K562 (cell line): ENCODE measurements at regions of chr10 and their contacts with region 1.

Region 1: DNA sequence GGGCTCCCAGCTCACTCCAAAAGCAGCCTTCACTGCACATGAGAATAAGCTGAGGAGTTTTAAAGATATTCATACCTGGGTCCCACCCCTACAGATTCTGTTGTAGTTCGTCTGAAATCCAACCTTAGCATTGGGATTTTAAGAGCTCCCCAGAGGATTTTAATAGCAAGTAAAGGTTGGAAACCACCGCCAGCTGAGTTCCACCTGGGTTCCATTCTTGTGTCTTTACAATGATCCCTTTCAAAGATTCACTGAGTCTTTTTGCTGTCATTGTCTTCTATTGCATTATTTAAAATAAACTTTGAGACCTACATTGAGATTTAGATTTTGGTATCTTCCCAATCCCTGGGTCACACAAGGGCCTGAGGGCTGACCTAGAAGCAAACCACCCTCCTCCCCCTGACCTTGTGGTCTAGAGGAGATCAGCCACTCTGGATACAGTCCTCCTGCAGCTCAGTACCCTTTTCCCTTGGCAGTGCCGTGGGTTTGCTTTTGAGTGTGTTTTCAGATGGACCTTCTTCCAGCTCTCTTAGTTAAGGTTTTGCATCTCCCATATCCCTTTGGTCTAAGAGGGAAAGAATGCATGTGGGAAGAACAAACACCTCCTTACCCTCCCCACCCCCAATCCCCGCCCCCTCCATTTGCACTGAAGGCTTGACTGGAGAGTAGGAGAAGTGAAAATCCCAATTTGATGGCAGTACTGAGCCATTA is 22.6 kb upstream of the SIRT1 start:
- DNase-seq: no peak
- ATAC-seq: peak; percentile 74
- H3K4me3 ChIP-seq: no peak overlapping the region
- H3K27ac ChIP-seq: no peak overlapping the region
- H3K4me1 ChIP-seq: no peaks in the 10 kb centered on the region; a peak in 1 of 5 replicates
- H3K27me3 ChIP-seq: no peaks in the 10 kb centered on the region
- CTCF ChIP-seq: no peak
- EP300 ChIP-seq: no peak
- POLR2A ChIP-seq: no peak
- RAD21 ChIP-seq: no peak

Region 2: DNA sequence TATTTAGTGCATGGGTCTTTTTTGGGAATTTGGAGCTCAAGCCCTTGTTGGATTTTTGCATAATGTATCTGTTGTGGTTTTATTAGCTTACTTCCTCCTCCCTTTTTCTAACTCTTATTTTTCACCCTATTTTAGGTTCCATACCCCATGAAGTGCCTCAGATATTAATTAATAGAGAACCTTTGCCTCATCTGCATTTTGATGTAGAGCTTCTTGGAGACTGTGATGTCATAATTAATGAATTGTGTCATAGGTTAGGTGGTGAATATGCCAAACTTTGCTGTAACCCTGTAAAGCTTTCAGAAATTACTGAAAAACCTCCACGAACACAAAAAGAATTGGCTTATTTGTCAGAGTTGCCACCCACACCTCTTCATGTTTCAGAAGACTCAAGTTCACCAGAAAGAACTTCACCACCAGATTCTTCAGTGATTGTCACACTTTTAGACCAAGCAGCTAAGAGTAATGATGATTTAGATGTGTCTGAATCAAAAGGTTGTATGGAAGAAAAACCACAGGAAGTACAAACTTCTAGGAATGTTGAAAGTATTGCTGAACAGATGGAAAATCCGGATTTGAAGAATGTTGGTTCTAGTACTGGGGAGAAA is 50.5 kb after region 1 on chr10:
- CTCF ChIA-PET with region 1: no interaction called
- POLR2A ChIA-PET with region 1: no interaction called
- in situ Hi-C with region 1: no loop called
- intact Hi-C with region 1: no loop called
- DNase-seq: no peak
- ATAC-seq: no peak
- H3K4me3 ChIP-seq: no peak overlapping the region
- H3K27ac ChIP-seq: no peak overlapping the region
- H3K4me1 ChIP-seq: no peaks in the 10 kb centered on the region
- H3K27me3 ChIP-seq: no peaks in the 10 kb centered on the region
- CTCF ChIP-seq: no peak
- EP300 ChIP-seq: no peak
- POLR2A ChIP-seq: no peak
- RAD21 ChIP-seq: no peak

Region 3: DNA sequence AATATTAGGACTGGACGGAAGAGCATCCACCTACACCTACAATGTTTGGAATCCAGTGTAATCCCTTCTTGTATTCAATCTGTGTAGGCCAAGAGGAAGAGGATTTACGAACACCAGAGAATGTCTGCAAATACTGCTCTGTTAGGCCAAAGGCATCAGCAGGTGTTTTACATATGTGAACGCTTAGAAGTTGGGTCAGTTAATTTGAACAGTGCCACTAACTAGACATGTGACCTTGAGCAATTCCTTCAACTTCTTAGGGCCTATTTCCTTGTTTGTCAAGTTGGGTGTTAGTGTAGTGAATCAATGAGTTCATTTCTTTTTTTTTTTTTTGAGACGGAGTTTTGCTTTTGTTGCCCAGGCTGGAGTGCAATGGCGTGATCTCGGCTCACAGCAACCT is 282.8 kb after region 1 on chr10:
- CTCF ChIA-PET with region 1: no interaction called
- POLR2A ChIA-PET with region 1: no interaction called
- in situ Hi-C with region 1: loop called (anchors 5 kb)
- intact Hi-C with region 1: no loop called
- DNase-seq: no peak
- ATAC-seq: no peak
- H3K4me3 ChIP-seq: no peak overlapping the region
- H3K27ac ChIP-seq: no peak overlapping the region
- H3K4me1 ChIP-seq: no peaks in the 10 kb centered on the region
- H3K27me3 ChIP-seq: peaks cover 8 to 16% of the 10 kb centered on the region in 2 experiments
- CTCF ChIP-seq: no peak
- EP300 ChIP-seq: no peak
- POLR2A ChIP-seq: no peak
- RAD21 ChIP-seq: no peak

Region 4: GRCh38 chr10:68362590-68362989 is 500.7 kb after region 1 on chr10:
- CTCF ChIA-PET with region 1: no interaction called
- POLR2A ChIA-PET with region 1: no interaction called
- in situ Hi-C with region 1: no loop called
- intact Hi-C with region 1: no loop called
- DNase-seq: no peak
- ATAC-seq: no peak
- H3K4me3 ChIP-seq: no peak overlapping the region
- H3K27ac ChIP-seq: no peak overlapping the region
- H3K4me1 ChIP-seq: no peaks in the 10 kb centered on the region
- H3K27me3 ChIP-seq: no peaks in the 10 kb centered on the region
- CTCF ChIP-seq: no peak
- EP300 ChIP-seq: no peak
- POLR2A ChIP-seq: no peak
- RAD21 ChIP-seq: no peak